Caco-2 (cell line): ENCODE measurements at regions of chr16 and their contacts with region 1.

Region 1: GRCh38 chr16:3150346-3151218 is 15.8 kb downstream of the ZNF213 start:
- DNase-seq: peak; percentile 95 to 98
- H3K4me3 ChIP-seq: peak overlapping the region; percentile 64
- H3K4me3 Mint-ChIP-seq: peak overlapping the region; percentile 95
- H3K27ac Mint-ChIP-seq: peak overlapping the region; percentile 93
- H3K4me1 ChIP-seq: no peaks in the 10 kb centered on the region; the same call in 1 of the 2 replicates
- H3K4me1 Mint-ChIP-seq: peaks cover 8% of the 10 kb centered on the region
- H3K27me3 ChIP-seq: no peaks in the 10 kb centered on the region
- H3K27me3 Mint-ChIP-seq: peaks cover 5% of the 10 kb centered on the region
- CTCF ChIP-seq: no peak

Region 2: DNA sequence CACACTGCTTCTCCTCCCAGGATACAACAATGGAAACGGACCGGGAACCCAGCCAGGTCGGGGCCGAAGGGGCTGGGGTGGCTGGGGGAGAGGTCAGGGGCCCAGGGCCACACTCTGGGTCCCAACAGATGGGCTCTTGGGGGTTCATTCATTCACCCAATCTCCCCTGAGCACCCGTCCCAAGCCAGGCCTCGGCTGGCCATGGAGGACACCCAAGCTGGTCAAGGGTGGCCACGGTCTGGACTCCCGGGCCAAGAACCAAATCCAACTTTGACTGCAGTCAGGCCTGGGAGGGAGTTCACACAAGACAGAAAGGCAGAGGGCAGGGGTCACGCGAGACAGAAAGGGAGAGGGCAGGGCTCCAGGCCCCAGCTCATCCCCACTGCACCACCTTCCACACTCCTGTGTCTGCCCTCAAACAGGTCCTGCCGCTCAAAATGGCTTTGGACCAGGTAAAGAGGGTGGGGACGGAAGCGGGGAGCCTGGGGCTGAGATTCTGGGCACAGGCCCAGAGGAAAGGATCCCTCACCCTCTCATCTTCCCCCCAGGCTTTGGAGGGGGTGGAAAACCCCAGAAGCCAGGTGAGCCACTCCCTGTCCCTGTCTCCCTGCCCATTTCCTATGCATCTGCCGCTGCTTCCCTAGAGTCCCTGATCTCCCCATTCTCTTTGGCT is 158.1 kb before region 1 on chr16:
- CTCF ChIA-PET with region 1: no interaction called
- POLR2A ChIA-PET with region 1: no interaction called
- intact Hi-C with region 1: no loop called
- DNase-seq: no peak
- H3K4me3 ChIP-seq: no peak overlapping the region
- H3K4me3 Mint-ChIP-seq: no peak overlapping the region
- H3K27ac Mint-ChIP-seq: no peak overlapping the region
- H3K4me1 ChIP-seq: 0 out of 2 replicates have a peak, but pooled peaks cover 3% of the 10 kb centered on the region
- H3K4me1 Mint-ChIP-seq: no peaks in the 10 kb centered on the region
- H3K27me3 ChIP-seq: no peaks in the 10 kb centered on the region
- H3K27me3 Mint-ChIP-seq: no peaks in the 10 kb centered on the region
- CTCF ChIP-seq: no peak

Region 3: GRCh38 chr16:3094289-3095027 is 56.1 kb before region 1 on chr16:
- CTCF ChIA-PET with region 1: no interaction called
- POLR2A ChIA-PET with region 1: no interaction called
- intact Hi-C with region 1: no loop called
- DNase-seq: peak in 1 of 2 experiments; percentile 32
- H3K4me3 ChIP-seq: no peak overlapping the region
- H3K4me3 Mint-ChIP-seq: no peak overlapping the region
- H3K27ac Mint-ChIP-seq: no peak overlapping the region
- H3K4me1 ChIP-seq: peaks cover 1% of the 10 kb centered on the region; the same call in 1 of the 2 replicates
- H3K4me1 Mint-ChIP-seq: peaks cover 6% of the 10 kb centered on the region
- H3K27me3 ChIP-seq: no peaks in the 10 kb centered on the region
- H3K27me3 Mint-ChIP-seq: no peaks in the 10 kb centered on the region
- CTCF ChIP-seq: peak; percentile 38 to 62

Region 4: DNA sequence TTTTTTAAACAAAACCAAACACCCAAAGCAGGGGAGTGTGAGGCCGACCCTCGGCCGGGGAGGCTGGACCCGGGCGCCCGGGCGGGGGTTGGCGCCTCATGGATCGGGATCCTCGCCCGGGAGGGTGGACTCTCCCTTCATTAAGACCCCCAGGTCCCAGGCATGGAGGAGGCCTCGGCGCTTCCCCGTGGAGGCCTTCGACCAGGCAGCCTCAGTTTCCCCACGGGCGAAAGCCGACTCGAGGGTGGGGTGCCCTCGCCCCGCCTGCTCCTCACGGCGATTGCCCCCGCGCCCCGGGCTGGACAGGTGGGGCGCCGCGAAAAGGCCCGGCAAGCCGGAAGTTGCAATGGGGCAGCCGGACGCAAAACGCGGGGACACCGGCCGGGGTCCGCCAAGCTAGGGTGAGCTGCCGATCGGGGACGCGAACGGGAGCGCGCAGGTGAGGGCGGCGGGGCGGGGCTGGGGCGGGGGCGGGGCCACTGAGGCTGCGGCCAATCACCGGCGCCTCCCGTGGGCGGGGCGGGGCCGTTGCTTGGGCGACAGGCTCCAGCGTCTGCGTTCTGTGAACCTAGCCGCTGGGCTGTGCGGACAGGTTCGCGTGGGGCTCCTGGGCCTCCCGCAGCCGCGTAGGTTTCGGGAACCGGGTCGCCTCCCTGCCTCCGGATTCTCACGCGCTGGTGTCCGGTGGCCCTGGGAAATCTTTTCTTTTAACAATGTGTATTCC is 44.2 kb before region 1 on chr16:
- CTCF ChIA-PET with region 1: interaction called, 7 read pairs
- POLR2A ChIA-PET with region 1: interaction called, 12 read pairs
- intact Hi-C with region 1: no loop called
- DNase-seq: peak; percentile 94
- H3K4me3 ChIP-seq: peak overlapping the region; percentile 90
- H3K4me3 Mint-ChIP-seq: peak overlapping the region; percentile 71
- H3K27ac Mint-ChIP-seq: peak overlapping the region; percentile 84
- H3K4me1 ChIP-seq: peaks cover 3% of the 10 kb centered on the region; the same call in 1 of the 2 replicates
- H3K4me1 Mint-ChIP-seq: peaks cover 6% of the 10 kb centered on the region
- H3K27me3 ChIP-seq: no peaks in the 10 kb centered on the region
- H3K27me3 Mint-ChIP-seq: no peaks in the 10 kb centered on the region
- CTCF ChIP-seq: no peak

Region 5: GRCh38 chr16:3129137-3130131 is 21.1 kb before region 1 on chr16:
- CTCF ChIA-PET with region 1: interaction called, 22 read pairs
- POLR2A ChIA-PET with region 1: interaction called, 17 read pairs
- intact Hi-C with region 1: loop called (anchors 1 kb)
- DNase-seq: peak; percentile 74 to 81
- H3K4me3 ChIP-seq: peak overlapping the region; percentile 36
- H3K4me3 Mint-ChIP-seq: peak overlapping the region; percentile 81
- H3K27ac Mint-ChIP-seq: peak overlapping the region; percentile 25
- H3K4me1 ChIP-seq: no peaks in the 10 kb centered on the region
- H3K4me1 Mint-ChIP-seq: peaks cover 15% of the 10 kb centered on the region
- H3K27me3 ChIP-seq: no peaks in the 10 kb centered on the region
- H3K27me3 Mint-ChIP-seq: no peaks in the 10 kb centered on the region
- CTCF ChIP-seq: peak; percentile 72 to 84

Region 6: DNA sequence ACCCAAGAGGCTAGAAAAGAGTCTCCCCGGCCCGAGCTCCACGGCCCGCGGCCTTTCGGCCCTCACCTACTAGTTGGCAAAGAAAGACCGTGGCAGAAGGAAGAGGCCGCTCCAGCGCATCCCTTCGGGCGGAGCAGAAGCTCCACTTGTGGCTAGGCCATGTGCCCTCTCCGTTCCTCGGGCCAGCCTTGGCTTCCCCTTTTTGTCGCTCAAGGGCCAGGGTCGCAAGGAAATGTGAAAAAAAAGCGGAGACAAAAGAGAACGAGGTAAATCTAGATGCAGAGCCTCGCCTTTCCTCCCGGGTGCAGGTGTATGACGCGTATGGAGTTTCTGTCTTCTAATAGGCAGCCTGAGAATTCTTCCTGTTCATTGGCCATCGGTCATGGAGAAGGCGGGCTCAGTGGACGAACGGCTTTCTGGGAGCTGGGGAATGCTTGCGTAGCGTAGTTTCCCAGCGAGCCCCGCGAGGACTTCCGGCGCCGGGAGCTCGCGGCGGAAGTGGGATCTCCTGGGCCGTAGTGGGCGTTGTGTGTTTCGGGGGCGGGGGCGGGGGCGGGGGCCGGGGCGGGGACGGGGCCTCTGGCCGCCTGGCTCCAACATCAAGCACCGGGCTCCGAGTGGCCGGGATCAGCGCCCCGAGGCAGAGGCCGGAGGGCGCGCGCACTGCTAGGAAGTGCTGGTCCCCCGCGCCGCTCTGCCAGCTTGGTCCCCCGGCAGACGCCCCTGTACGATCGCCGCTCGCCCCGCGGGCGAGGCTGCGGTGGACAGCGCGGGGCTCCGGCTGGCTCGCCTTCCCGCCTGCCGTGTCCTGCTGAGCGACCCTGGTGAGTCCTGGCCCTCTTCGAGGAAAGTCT is 15.8 kb before region 1 on chr16 and contains the start of gene ZNF213:
- CTCF ChIA-PET with region 1: interaction called, 22 read pairs
- POLR2A ChIA-PET with region 1: interaction called, 17 read pairs
- intact Hi-C with region 1: loop called (anchors 1 kb)
- DNase-seq: peak; percentile 94 to 96
- H3K4me3 ChIP-seq: peak within 1 kb of the TSS; percentile 84
- H3K4me3 Mint-ChIP-seq: peak within 1 kb of the TSS; percentile 90
- H3K27ac Mint-ChIP-seq: peak within 1 kb of the TSS; percentile 91
- H3K4me1 ChIP-seq: no peaks in the 10 kb centered on the region
- H3K4me1 Mint-ChIP-seq: peaks cover 1% of the 10 kb centered on the region
- H3K27me3 ChIP-seq: no peaks in the 10 kb centered on the region
- H3K27me3 Mint-ChIP-seq: no peaks in the 10 kb centered on the region
- CTCF ChIP-seq: no peak
- total RNA-seq, gene ZNF213: 5.3 and 5.5 TPM in 2 replicates

Region 7: DNA sequence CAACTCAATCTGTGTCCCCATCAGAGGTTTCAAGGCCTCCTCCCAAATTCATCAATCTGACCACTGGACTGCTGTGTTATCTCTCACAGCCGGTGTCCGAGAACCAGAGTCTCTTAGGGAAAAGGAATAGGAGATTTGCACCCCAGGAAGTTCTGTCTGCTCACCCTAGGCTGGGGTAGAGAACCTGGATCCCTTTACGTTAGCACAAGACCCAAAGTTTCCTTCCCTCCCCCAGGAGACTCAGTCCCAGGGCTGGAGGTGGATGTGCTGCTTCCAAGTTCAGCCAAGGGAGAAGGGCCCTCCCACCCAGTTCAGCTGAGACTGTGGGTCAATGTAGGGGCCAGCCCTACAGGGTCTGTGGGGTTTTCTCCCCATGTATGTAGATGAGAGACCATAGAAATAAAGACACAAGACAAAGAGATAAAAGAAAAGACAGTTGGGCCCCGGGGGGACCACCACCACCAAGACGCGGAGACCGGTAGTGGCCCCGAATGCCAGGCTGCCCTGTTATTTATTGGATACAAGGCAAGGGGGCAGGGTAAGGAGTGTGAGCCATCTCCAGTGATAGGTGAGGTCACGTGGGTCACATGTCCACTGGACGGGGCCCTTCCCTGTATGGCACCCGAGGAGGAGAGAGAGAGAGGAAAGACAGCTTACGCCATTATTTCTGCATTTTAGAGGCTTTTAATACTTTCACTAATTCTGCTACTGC is 14.7 kb after region 1 on chr16:
- CTCF ChIA-PET with region 1: interaction called, 8 read pairs
- POLR2A ChIA-PET with region 1: no interaction called
- intact Hi-C with region 1: loop called (anchors 1 kb)
- DNase-seq: no peak
- H3K4me3 ChIP-seq: no peak overlapping the region
- H3K4me3 Mint-ChIP-seq: peak overlapping the region; percentile 60
- H3K27ac Mint-ChIP-seq: no peak overlapping the region
- H3K4me1 ChIP-seq: 0 out of 2 replicates have a peak, but pooled peaks cover 4% of the 10 kb centered on the region
- H3K4me1 Mint-ChIP-seq: peaks cover 7% of the 10 kb centered on the region
- H3K27me3 ChIP-seq: no peaks in the 10 kb centered on the region
- H3K27me3 Mint-ChIP-seq: no peaks in the 10 kb centered on the region
- CTCF ChIP-seq: no peak

Region 8: GRCh38 chr16:3282730-3283524 is 132.3 kb after region 1 on chr16 and contains the start of gene ZNF263:
- CTCF ChIA-PET with region 1: no interaction called
- POLR2A ChIA-PET with region 1: no interaction called
- intact Hi-C with region 1: loop called (anchors 5 kb)
- DNase-seq: peak; percentile 96
- H3K4me3 ChIP-seq: peak within 1 kb of the TSS; percentile 72
- H3K4me3 Mint-ChIP-seq: peak within 1 kb of the TSS; percentile 98
- H3K27ac Mint-ChIP-seq: peak within 1 kb of the TSS; percentile 99
- H3K4me1 ChIP-seq: peaks cover 19% of the 10 kb centered on the region
- H3K4me1 Mint-ChIP-seq: no peaks in the 10 kb centered on the region
- H3K27me3 ChIP-seq: no peaks in the 10 kb centered on the region
- H3K27me3 Mint-ChIP-seq: no peaks in the 10 kb centered on the region
- CTCF ChIP-seq: no peak
- total RNA-seq, gene ZNF263: 37.0 and 37.4 TPM in 2 replicates

Region 9: GRCh38 chr16:3457434-3458252 is 307.1 kb after region 1 on chr16:
- CTCF ChIA-PET with region 1: no interaction called
- POLR2A ChIA-PET with region 1: no interaction called
- intact Hi-C with region 1: loop called (anchors 5 kb)
- DNase-seq: peak; percentile 86 to 95
- H3K4me3 ChIP-seq: peak overlapping the region; percentile 98
- H3K4me3 Mint-ChIP-seq: peak overlapping the region; percentile 76
- H3K27ac Mint-ChIP-seq: peak overlapping the region; percentile 82
- H3K4me1 ChIP-seq: peaks cover 17% of the 10 kb centered on the region
- H3K4me1 Mint-ChIP-seq: peaks cover 37% of the 10 kb centered on the region
- H3K27me3 ChIP-seq: no peaks in the 10 kb centered on the region
- H3K27me3 Mint-ChIP-seq: no peaks in the 10 kb centered on the region
- CTCF ChIP-seq: peak in 1 of 2 experiments; percentile 54